HepG2 (cell line): ENCODE measurements at regions of chr7 and their contacts with region 1.

Region 1: GRCh38 chr7:103593691-103594090 is 147.7 kb upstream of the SLC26A5 start:
- DNase-seq: no peak
- ATAC-seq: no peak
- H3K4me3 ChIP-seq: no peak overlapping the region
- H3K27ac ChIP-seq: no peak overlapping the region
- H3K4me1 ChIP-seq: peaks cover 8% of the 10 kb centered on the region; the same call in 1 of the 2 replicates
- H3K27me3 ChIP-seq: no peaks in the 10 kb centered on the region
- CTCF ChIP-seq: no peak
- EP300 ChIP-seq: no peak
- POLR2A ChIP-seq: no peak
- RAD21 ChIP-seq: no peak

Region 2: GRCh38 chr7:103613655-103614642 is 20.3 kb after region 1 on chr7:
- CTCF ChIA-PET with region 1: no interaction called
- POLR2A ChIA-PET with region 1: no interaction called
- in situ Hi-C with region 1: no loop called
- intact Hi-C with region 1: no loop called
- DNase-seq: peak; percentile 34
- ATAC-seq: peak; percentile 69
- H3K4me3 ChIP-seq: no peak overlapping the region
- H3K27ac ChIP-seq: no peak overlapping the region
- H3K4me1 ChIP-seq: no peaks in the 10 kb centered on the region
- H3K27me3 ChIP-seq: no peaks in the 10 kb centered on the region
- CTCF ChIP-seq: peak; percentile 50
- EP300 ChIP-seq: no peak
- POLR2A ChIP-seq: no peak
- RAD21 ChIP-seq: peak; percentile 30; the same call in 1 of the 2 replicates

Region 3: DNA sequence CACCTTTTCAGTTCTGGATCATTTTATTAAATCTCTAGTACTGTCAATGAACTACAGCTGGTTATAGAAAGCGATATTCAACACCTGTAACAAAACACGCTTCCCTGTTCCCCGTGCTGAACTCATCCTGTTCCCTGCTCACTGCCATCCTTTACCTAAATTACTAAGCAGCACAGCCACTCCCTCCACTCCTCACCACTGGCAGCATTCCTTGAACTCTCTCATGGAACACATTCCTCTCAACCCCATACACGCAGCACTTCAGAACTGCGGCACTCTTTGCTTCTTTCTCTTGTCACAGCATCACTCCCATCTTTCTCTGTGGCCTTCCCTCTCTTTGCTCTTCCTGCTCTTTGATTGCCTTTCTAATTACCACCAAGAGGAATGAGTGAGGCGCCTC is 368.4 kb after region 1 on chr7:
- CTCF ChIA-PET with region 1: no interaction called
- POLR2A ChIA-PET with region 1: no interaction called
- in situ Hi-C with region 1: no loop called
- intact Hi-C with region 1: no loop called
- DNase-seq: no peak
- ATAC-seq: no peak; the same call in 2 of the 3 replicates
- H3K4me3 ChIP-seq: no peak overlapping the region
- H3K27ac ChIP-seq: no peak overlapping the region
- H3K4me1 ChIP-seq: no peaks in the 10 kb centered on the region
- H3K27me3 ChIP-seq: no peaks in the 10 kb centered on the region
- CTCF ChIP-seq: no peak
- EP300 ChIP-seq: no peak
- POLR2A ChIP-seq: no peak
- RAD21 ChIP-seq: no peak

Region 4: GRCh38 chr7:104679085-104679484 is 1085.4 kb after region 1 on chr7:
- CTCF ChIA-PET with region 1: no interaction called
- POLR2A ChIA-PET with region 1: no interaction called
- in situ Hi-C with region 1: no loop called
- intact Hi-C with region 1: loop called (anchors 5 kb)
- DNase-seq: no peak
- ATAC-seq: no peak
- H3K4me3 ChIP-seq: no peak overlapping the region
- H3K27ac ChIP-seq: no peak overlapping the region
- H3K4me1 ChIP-seq: no peaks in the 10 kb centered on the region
- H3K27me3 ChIP-seq: peaks cover 0 to 12% of the 10 kb centered on the region in 2 experiments; a peak in 2 of 5 replicates
- CTCF ChIP-seq: no peak
- EP300 ChIP-seq: no peak
- POLR2A ChIP-seq: no peak
- RAD21 ChIP-seq: no peak